ENCODE measurements at regions of chrX and their contacts with region 1.

Region 1: DNA sequence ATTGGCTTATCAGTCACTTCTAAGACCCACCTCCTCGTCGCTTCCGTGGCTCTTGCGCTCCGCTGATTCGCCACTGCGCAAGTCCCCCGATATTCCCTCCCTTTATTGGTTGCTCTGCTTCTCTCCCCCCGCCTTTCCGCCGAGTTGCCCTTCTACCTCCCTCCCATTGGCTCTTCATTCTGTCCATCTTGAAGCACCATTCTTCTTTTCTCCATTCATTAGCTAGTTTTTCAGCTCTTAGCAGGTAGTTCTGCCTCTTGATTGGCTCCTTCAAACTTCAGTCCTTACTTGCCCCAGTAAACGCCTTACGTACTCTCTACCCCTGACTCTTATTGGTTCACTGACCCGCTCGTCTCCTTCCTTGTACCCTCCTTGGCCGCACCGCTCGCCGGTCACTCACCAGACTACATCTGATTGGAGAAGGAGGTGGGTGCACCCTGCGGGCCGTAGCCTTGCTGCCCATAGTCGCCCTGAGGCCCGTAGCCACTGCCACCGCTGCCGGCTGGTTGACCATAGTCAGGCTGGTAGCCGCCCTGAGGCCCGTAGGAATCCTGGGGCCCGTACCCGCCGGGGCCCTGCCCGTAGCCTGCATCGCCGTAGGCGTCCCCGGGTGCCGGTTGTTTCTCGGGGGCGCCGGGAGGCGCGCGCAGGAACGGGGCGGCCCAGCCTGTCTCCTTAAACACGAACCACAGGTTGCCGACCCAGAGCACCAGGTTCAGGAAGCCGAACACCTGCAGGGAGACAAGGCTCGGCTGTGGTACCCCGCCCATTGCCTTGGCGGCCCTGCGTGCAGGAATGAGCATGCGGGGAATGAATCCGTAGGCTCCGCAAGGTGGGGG is 5.1 kb upstream of the PRICKLE3 start:
- DNase-seq: peak; percentile 99
- H3K4me3 ChIP-seq: peak overlapping the region; percentile 62 to 70 (median 67)
- H3K27ac ChIP-seq: peak overlapping the region; percentile 50
- H3K4me1 ChIP-seq: peaks cover 3% of the 10 kb centered on the region
- H3K27me3 ChIP-seq: no peaks in the 10 kb centered on the region
- CTCF ChIP-seq: no peak

Region 2: GRCh38 chrX:49053223-49054072 is 137.8 kb before region 1 on chrX:
- CTCF ChIA-PET with region 1: no interaction called
- dilution Hi-C with region 1: no loop called
- in situ Hi-C with region 1: no loop called
- intact Hi-C with region 1: no loop called
- DNase-seq: no peak
- H3K4me3 ChIP-seq: peak overlapping the region in 2 of 3 experiments; percentile 52 to 53
- H3K27ac ChIP-seq: no peak overlapping the region
- H3K4me1 ChIP-seq: no peaks in the 10 kb centered on the region
- H3K27me3 ChIP-seq: no peaks in the 10 kb centered on the region
- CTCF ChIP-seq: no peak

Region 3: DNA sequence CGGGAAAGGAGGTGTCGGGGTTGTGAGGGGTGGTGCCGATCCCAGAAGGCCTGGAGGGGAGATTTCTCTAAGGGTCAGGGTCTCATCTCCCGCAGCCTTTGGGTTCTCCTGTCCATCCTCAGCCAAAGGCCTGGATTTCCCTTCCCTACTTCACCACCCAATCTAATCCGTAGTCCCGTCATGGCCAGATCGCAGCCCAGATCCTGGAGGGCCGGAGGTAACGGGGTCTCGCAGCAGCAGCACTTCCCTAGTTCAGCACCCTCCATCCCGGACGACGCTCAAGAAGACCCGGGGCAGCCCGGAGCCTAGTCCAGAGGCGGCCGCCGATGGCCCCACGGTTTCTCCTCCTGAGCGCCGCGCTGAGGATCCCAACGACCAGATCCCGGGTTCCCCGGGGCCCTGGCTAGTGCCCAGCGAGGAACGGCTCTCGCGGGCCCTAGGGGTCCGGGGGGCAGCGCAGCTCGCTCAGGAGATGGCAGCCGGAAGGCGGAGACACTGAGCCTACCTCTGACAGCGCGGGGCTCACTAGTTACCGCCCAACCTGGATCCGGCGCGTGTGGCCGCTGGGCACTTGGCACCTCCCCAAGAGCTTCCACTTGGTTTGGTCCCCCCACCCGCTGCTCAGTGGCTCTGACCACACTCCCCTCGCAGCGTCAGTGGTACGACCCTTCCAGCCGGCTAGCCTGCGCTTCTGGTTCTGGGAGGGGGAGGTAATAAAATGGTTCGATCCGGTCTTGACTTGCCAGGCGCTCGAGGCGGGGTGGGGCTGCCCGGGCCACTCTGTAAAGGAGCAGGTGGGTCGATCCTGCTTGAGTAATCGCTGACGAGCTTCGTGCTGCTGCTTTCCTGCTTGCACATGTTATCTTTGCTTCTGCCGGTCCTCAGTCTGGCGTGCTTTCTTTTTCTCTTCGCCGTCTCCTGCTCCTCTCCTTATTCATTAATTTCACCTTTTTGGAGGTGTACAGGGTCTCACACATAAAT is 25.1 kb before region 1 on chrX:
- CTCF ChIA-PET with region 1: interaction called, 3 read pairs
- dilution Hi-C with region 1: no loop called
- in situ Hi-C with region 1: no loop called
- intact Hi-C with region 1: loop called (anchors 1 kb)
- DNase-seq: peak; percentile 88
- H3K4me3 ChIP-seq: peak overlapping the region; percentile 18 to 50 (median 48)
- H3K27ac ChIP-seq: peak overlapping the region; percentile 81
- H3K4me1 ChIP-seq: peaks cover 7% of the 10 kb centered on the region
- H3K27me3 ChIP-seq: no peaks in the 10 kb centered on the region
- CTCF ChIP-seq: peak in 1 of 2 donors; percentile 47

Region 4: DNA sequence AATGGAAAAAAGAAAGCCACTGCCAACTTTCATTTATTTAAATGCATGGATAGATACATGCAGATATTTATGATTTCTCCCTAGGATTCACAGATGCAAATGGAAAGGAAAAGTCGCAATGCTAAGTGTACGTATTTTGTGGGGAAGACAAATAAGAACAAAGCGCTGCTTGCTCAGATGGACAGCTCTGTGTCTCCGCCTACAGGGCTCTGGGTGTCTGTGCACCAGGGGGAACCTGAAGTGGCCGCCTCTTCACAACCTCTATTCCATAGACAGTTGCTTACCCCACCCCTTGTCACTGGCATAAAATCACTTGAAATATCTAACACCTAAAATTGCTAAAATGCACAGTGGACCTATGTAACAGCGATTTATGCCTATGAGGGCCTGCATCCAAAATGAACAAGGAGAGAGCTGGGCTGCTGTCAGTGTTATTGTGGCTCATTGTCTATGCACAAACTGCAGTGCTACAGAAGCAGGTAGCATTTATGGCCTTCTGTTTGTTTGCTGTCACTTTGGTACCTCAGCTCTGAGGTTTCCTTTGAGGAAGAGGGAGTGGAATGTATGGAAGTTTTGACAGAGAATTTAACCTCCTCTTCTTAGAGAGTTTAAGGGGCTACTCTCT is 563.1 kb after region 1 on chrX:
- CTCF ChIA-PET with region 1: no interaction called
- dilution Hi-C with region 1: no loop called
- in situ Hi-C with region 1: no loop called
- intact Hi-C with region 1: loop called (anchors 5 kb)
- DNase-seq: peak; percentile 3
- H3K4me3 ChIP-seq: no peak overlapping the region
- H3K27ac ChIP-seq: no peak overlapping the region
- H3K4me1 ChIP-seq: no peaks in the 10 kb centered on the region
- H3K27me3 ChIP-seq: peaks cover 2% of the 10 kb centered on the region
- CTCF ChIP-seq: peak; percentile 71 to 79

Region 5: DNA sequence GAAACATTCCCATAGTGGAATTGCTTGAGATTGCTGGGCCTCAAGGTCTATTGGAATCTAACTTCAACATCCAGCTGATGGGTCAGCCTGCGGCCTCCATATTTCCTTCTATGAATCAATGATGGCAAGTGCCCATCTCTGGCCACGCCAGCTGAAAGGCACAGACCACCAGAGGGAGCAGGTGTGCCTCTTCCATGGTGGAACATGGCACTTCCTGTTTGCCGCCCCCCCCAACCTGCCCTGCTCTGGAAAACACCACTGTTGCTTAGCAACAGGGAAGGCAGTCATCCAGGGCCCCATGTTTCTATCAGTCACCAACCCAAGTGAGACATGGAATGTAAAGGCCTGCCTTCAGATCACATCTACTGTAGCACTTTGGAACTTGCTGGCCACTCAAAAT is 649.4 kb after region 1 on chrX:
- CTCF ChIA-PET with region 1: no interaction called
- dilution Hi-C with region 1: no loop called
- in situ Hi-C with region 1: no loop called
- intact Hi-C with region 1: loop called (anchors 10 kb)
- DNase-seq: peak; percentile 54
- H3K4me3 ChIP-seq: no peak overlapping the region
- H3K27ac ChIP-seq: no peak overlapping the region
- H3K4me1 ChIP-seq: no peaks in the 10 kb centered on the region
- H3K27me3 ChIP-seq: no peaks in the 10 kb centered on the region
- CTCF ChIP-seq: peak; percentile 38 to 49

Region 6: GRCh38 chrX:49878834-49879659 is 687.8 kb after region 1 on chrX and contains the start of gene USP27X:
- CTCF ChIA-PET with region 1: no interaction called
- dilution Hi-C with region 1: no loop called
- in situ Hi-C with region 1: no loop called
- intact Hi-C with region 1: loop called (anchors 10 kb)
- DNase-seq: peak; percentile 75
- H3K4me3 ChIP-seq: peak within 1 kb of the TSS; percentile 37 to 64 (median 51)
- H3K27ac ChIP-seq: peak within 1 kb of the TSS; percentile 25
- H3K4me1 ChIP-seq: peaks cover 10% of the 10 kb centered on the region
- H3K27me3 ChIP-seq: no peaks in the 10 kb centered on the region
- CTCF ChIP-seq: peak; percentile 40 to 49
- total RNA-seq, gene USP27X: 2.4 to 2.5 TPM

Measured in mammary epithelial cell (primary cell).